Posterior vena cava (tissue), 2 donors: ENCODE measurements at regions of chr19 and their contacts with region 1.

Region 1: DNA sequence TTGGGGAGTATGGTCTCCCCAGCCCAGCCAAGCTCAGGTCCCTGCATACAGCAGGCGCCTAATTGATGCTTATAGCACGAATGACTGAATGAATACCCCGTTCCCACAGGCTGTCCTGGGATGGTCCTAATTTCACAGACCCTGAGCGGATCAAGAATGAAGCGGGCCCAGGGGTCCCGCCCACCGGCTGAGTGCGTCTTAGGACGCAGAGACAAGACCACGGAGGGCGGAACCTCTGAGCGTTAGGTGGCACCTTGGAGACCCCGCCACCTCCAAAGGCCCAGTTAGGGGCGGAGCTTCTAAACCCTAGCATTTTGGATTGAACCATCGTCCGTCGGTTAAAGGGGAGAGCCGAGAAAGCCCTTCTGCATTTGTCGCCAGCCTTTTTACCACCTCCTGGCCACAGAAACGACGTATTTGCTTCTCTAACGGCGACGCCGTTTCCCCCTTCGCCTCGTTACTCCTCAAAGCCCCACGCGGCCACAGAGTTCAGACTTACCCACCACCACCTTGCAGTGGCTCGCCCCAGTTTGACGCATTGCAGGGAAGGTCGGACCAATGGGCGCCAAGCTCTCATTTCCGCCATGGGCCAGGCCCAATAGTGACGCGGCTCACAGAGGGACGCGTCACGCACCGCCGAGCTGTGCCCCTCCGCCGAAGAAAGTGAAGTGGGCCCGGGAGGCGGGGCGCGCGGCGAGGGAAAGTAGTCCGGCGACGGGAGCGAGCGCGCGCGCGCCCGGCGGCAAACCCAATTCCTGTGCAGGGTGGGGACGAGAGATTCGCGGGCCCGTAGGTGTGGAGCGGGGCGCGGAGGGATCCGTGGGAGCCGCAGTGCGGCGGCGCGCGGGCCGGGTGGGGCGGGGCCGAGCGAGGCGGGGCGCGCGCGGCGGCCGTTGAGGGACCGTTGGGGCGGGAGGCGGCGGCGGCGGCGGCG is 479 bp upstream of the CALM3 start:
- DNase-seq: peak; percentile 99

Region 2: DNA sequence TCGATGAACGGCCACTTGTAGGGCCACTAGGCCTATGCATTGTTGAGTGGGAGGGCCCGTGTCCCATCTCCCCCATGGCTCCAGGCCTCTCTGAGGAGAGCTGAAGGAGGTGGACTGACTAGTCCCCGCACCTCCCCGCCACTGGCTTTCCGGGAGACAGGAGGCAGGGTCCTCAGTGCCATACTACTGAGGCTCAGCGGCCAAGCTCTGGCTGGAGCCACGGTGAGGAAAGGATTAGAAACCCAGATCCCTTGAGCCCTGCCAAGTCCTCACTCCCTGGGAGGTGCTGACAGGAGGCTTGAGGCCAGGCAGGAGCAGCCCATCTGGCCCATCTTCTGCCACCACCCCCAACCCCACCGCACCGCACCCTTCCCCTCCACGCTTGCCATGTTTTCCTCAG is 216.3 kb before region 1 on chr19:
- intact Hi-C with region 1: no loop called
- DNase-seq: peak; percentile 75

Region 3: DNA sequence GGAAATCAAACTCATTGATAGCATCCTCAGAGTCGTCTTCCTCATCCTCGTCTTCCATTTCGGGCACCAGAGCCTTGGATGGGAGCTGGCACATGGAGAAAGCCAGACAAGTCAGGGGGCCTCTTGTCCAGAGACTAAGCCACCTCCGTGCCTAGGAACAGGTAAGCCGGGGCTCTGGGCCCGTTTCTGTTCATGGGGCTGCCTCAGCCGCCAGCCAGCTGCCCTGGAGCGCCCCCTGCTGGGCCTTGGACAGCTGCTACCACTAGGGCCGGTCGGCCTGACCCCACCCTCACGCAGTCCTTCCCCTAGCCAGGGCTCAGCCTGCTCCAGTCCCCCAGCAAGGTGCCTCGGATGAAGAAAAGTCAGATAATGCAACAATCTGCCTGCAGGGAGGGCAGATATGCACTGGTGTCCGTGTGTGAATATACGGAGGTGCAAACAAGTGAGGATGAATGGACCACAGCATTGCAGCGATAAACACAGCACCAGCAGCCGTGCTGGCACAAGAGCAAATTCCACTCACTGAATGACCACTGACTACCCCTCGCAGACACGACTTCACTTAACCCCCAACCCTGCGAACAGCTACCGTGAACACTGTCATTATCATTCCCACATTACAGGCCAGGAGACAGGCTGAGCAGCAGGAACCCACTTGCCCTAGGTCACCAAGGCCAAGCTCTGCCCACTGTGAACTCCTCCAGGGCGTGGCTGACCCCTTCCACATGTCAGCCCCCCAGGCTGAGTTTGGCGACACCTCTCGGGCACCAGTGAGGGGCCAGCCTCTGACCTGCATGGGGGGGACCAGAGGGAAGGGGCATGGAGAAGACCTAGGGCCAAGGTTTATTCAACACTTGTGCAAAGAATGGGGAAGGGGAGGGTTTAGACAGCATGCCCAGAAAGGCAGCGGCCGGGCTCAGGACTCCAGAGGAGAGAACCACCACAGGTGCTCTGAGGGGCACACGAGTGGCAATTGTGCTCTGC is 128.3 kb after region 1 on chr19:
- intact Hi-C with region 1: loop called in 1 of 2 experiments (anchors 10 kb)
- DNase-seq: peak; percentile 94